Activated CD4-positive, alpha-beta T cell treated with anti-CD3 and anti-CD28 coated beads for 36 hours (primary cell): ENCODE measurements at regions of chr9 and their contacts with region 1.

Region 1: DNA sequence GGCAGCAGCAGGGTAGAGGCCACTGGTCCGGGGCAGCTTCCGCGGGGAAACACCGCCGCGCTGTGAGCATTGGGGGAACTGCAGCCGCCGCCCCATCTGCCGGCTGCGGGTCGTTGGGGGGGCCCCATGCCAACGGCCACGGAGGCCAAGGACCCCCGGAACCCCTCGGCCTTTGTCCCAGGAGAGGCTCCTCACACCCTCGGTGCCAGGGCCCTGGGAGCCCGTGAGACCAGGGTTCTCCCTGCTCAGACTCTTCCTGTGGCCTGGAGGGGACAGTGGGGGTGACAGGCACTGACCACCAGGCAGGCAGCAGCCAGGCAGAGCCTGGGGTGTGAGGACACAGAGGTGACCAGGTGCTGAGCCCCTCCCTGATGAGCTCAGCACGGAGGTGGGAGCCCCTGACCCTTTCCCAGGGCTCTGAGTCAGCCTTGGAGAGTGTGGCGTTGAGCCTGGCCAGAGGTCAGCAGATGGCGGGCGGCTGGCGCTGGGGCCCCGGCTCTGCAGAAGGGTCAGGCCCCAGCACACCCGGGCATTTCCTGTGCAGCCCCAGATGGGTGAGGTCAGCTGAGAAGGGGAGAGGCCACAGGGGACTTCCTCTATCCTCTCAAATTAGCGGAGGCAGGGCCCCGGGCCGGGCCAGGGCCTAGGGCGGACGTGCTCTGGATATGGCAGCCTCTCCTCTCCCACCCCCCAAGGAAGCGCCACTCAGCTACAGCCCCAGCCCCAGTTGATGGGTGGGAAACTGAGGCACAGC is 17.9 kb upstream of the EGFL7 start:
- DNase-seq: peak; percentile 87
- ATAC-seq: peak; percentile 98
- H3K4me3 Mint-ChIP-seq: no peak overlapping the region
- H3K27ac Mint-ChIP-seq: no peak overlapping the region
- H3K4me1 Mint-ChIP-seq: no peaks in the 10 kb centered on the region
- H3K27me3 Mint-ChIP-seq: peaks cover 20% of the 10 kb centered on the region

Region 2: GRCh38 chr9:136312436-136312835 is 332.3 kb before region 1 on chr9:
- CTCF ChIA-PET with region 1: interaction called, 3 read pairs
- POLR2A ChIA-PET with region 1: no interaction called
- intact Hi-C with region 1: loop called in 1 of 2 experiments (anchors 2 kb)
- DNase-seq: peak; percentile 74
- ATAC-seq: peak; percentile 80
- H3K4me3 Mint-ChIP-seq: no peak overlapping the region
- H3K27ac Mint-ChIP-seq: no peak overlapping the region
- H3K4me1 Mint-ChIP-seq: no peaks in the 10 kb centered on the region
- H3K27me3 Mint-ChIP-seq: no peaks in the 10 kb centered on the region

Region 3: DNA sequence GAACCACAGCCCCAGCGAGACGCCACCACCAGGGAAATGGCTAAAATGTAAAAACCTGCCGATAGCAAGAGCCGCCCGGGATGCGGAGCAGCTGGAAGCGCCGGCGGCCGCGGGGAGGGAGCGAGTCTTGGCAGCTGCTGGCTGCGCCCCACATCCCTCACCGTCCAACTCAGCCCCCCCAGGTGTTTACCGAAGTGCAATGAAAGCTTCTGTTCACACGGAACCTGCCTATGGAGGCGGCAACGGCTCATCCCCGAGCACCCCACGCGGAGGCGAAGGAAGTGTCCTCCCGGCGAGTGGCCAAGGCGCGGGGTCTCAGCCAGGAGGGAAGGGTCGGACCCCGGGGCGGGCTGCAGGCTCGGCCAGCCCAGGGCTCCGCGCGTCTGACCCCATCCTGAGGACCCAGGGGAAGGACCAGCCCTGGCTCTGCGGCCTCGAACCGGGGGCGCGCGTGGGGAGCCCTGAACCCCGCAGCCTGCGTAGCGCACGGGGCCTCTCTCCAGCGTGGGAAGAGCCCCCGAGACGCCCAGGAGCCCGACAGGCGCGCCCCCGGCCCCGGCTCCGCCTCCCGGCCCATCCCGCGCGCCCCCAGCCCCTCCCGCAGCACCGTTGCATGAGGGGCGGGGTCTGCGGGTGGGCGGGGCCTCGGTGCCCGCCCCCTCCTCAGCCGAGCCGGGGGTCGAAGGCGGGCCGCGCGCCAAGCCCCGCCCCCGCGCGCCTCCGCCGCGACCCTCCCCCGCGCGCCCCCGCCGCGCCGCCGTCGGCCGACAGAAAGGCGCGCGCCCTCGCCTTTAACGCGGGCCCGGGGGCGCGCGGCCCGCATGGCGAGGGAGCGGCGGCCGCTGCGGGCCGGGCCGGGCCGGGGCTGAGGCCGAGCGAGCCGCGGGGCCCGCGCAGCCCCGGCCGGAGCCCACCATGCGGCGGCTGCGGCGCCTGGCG is 67.2 kb after region 1 on chr9 and contains the start of gene DIPK1B:
- CTCF ChIA-PET with region 1: no interaction called
- POLR2A ChIA-PET with region 1: no interaction called
- intact Hi-C with region 1: no loop called
- DNase-seq: peak; percentile 25
- ATAC-seq: peak; percentile 26
- H3K4me3 Mint-ChIP-seq: peak within 1 kb of the TSS; percentile 14
- H3K27ac Mint-ChIP-seq: no peak within 1 kb of the TSS
- H3K4me1 Mint-ChIP-seq: peaks cover 2% of the 10 kb centered on the region
- H3K27me3 Mint-ChIP-seq: peaks cover 27% of the 10 kb centered on the region
- total RNA-seq, gene DIPK1B: 0.21 to 0.25 TPM